Naive thymus-derived CD4-positive, alpha-beta T cell (primary cell): ENCODE measurements at regions of chr5 and their contacts with region 1.

Region 1: GRCh38 chr5:140113699-140114263 is at the start of gene PURA:
- DNase-seq: peak; percentile 94 to 98 (median 97)
- ATAC-seq: peak; percentile 93
- H3K4me3 ChIP-seq: peak within 1 kb of the TSS; percentile 77
- H3K4me3 Mint-ChIP-seq: peak within 1 kb of the TSS; percentile 86 to 97 (median 94)
- H3K27ac ChIP-seq: peak within 1 kb of the TSS; percentile 89
- H3K27ac Mint-ChIP-seq: peak within 1 kb of the TSS; percentile 88 to 99 (median 95)
- H3K4me1 ChIP-seq: peaks cover 46 to 57% of the 10 kb centered on the region in 2 donors
- H3K4me1 Mint-ChIP-seq: peaks cover 53 to 95% (median 77%) of the 10 kb centered on the region in 7 donors
- H3K27me3 ChIP-seq: peaks cover 0 to 7% of the 10 kb centered on the region in 2 donors
- H3K27me3 Mint-ChIP-seq: peaks cover 0 to 46% (median 4%) of the 10 kb centered on the region in 5 donors
- total RNA-seq, gene PURA: 11.6 to 33.5 (median 13.9) TPM

Region 2: GRCh38 chr5:138352071-138352721 is 1761.6 kb before region 1 on chr5 and contains the start of gene KDM3B:
- CTCF ChIA-PET with region 1: no interaction called
- POLR2A ChIA-PET with region 1: interaction called, 8 read pairs
- intact Hi-C with region 1: loop called in 1 of 2 experiments (anchors 10 kb)
- DNase-seq: peak; percentile 82 to 100 (median 96)
- ATAC-seq: peak; percentile 96
- H3K4me3 ChIP-seq: peak within 1 kb of the TSS; percentile 93
- H3K4me3 Mint-ChIP-seq: peak within 1 kb of the TSS; percentile 88 to 98 (median 96)
- H3K27ac ChIP-seq: peak within 1 kb of the TSS; percentile 91
- H3K27ac Mint-ChIP-seq: peak within 1 kb of the TSS; percentile 90 to 98 (median 96)
- H3K4me1 ChIP-seq: peaks cover 18 to 32% of the 10 kb centered on the region in 2 donors
- H3K4me1 Mint-ChIP-seq: peaks cover 30 to 54% (median 48%) of the 10 kb centered on the region in 7 donors
- H3K27me3 ChIP-seq: no peaks in the 10 kb centered on the region
- H3K27me3 Mint-ChIP-seq: no peaks in the 10 kb centered on the region
- total RNA-seq, gene KDM3B: 67.7 to 90.2 (median 82.8) TPM

Region 3: GRCh38 chr5:140073296-140073695 is 40.5 kb before region 1 on chr5:
- CTCF ChIA-PET with region 1: interaction called, 4 read pairs
- POLR2A ChIA-PET with region 1: interaction called, 11 read pairs
- intact Hi-C with region 1: loop called in 1 of 2 experiments (anchors 1 kb)
- DNase-seq: peak in 6 of 9 donors; percentile 25 to 54 (median 44)
- ATAC-seq: no peak
- H3K4me3 ChIP-seq: no peak overlapping the region
- H3K4me3 Mint-ChIP-seq: no peak overlapping the region
- H3K27ac ChIP-seq: no peak overlapping the region
- H3K27ac Mint-ChIP-seq: no peak overlapping the region
- H3K4me1 ChIP-seq: no peaks in the 10 kb centered on the region
- H3K4me1 Mint-ChIP-seq: no peaks in the 10 kb centered on the region
- H3K27me3 ChIP-seq: no peaks in the 10 kb centered on the region
- H3K27me3 Mint-ChIP-seq: peaks cover 12 to 50% (median 24%) of the 10 kb centered on the region in 5 donors

Region 4: GRCh38 chr5:140145818-140146522 is 32.2 kb after region 1 on chr5:
- CTCF ChIA-PET with region 1: interaction called, 39 read pairs
- POLR2A ChIA-PET with region 1: interaction called, 7 read pairs
- intact Hi-C with region 1: loop called (anchors 1 kb)
- DNase-seq: peak in 8 of 9 donors; percentile 25 to 69 (median 42)
- ATAC-seq: peak; percentile 86
- H3K4me3 ChIP-seq: peak overlapping the region; percentile 27
- H3K4me3 Mint-ChIP-seq: peak overlapping the region in 9 of 10 donors; percentile 16 to 81 (median 72)
- H3K27ac ChIP-seq: no peak overlapping the region
- H3K27ac Mint-ChIP-seq: no peak overlapping the region
- H3K4me1 ChIP-seq: peaks cover 6 to 9% of the 10 kb centered on the region in 2 donors
- H3K4me1 Mint-ChIP-seq: peaks cover 14 to 29% (median 25%) of the 10 kb centered on the region in 7 donors
- H3K27me3 ChIP-seq: peaks cover 0 to 6% of the 10 kb centered on the region in 2 donors
- H3K27me3 Mint-ChIP-seq: peaks cover 9 to 48% (median 21%) of the 10 kb centered on the region in 5 donors

Region 5: DNA sequence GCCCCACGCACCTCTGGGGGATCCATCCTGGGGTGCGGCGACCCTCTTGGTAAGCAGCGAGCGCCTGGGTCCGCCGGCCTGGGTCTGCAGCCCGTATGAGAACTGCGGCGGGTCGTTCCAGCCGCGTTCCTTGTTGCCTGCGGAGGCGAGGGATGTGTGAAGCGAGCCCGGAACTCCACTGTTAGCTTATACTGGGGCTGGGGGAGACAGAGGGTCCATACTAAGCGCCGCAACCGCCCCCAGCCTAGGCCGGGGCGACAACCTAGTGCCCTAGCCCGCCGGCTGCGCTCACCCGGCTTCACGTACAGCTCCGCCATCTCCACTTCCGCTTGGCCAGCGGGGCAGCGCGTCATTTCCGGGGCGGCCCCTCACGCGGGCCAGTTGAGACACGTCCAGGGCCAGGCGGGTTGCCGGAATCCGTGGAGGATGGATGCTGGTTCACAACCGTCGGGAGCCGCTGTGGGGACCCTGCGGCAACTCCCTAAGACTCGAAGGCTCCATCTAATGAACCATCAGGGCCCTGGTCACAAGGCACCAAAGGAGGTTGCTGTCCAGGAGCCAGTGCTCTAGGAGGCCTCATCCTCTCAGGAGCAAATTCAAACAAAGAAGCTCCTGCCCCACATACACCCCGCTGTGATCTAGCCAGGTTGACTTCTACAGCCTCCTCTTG is 443.5 kb after region 1 on chr5 and contains the start of gene SRA1:
- CTCF ChIA-PET with region 1: no interaction called
- POLR2A ChIA-PET with region 1: no interaction called
- intact Hi-C with region 1: loop called (anchors 5 kb)
- DNase-seq: peak; percentile 62 to 91 (median 72)
- ATAC-seq: peak; percentile 94
- H3K4me3 ChIP-seq: peak within 1 kb of the TSS; percentile 73
- H3K4me3 Mint-ChIP-seq: peak within 1 kb of the TSS; percentile 84 to 93 (median 92)
- H3K27ac ChIP-seq: peak within 1 kb of the TSS; percentile 97
- H3K27ac Mint-ChIP-seq: peak within 1 kb of the TSS; percentile 85 to 97 (median 95)
- H3K4me1 ChIP-seq: peaks cover 14 to 20% of the 10 kb centered on the region in 2 donors
- H3K4me1 Mint-ChIP-seq: peaks cover 45 to 63% (median 50%) of the 10 kb centered on the region in 7 donors
- H3K27me3 ChIP-seq: no peaks in the 10 kb centered on the region
- H3K27me3 Mint-ChIP-seq: no peaks in the 10 kb centered on the region
- total RNA-seq, gene SRA1: 23.8 to 45.5 (median 34.0) TPM

Region 6: DNA sequence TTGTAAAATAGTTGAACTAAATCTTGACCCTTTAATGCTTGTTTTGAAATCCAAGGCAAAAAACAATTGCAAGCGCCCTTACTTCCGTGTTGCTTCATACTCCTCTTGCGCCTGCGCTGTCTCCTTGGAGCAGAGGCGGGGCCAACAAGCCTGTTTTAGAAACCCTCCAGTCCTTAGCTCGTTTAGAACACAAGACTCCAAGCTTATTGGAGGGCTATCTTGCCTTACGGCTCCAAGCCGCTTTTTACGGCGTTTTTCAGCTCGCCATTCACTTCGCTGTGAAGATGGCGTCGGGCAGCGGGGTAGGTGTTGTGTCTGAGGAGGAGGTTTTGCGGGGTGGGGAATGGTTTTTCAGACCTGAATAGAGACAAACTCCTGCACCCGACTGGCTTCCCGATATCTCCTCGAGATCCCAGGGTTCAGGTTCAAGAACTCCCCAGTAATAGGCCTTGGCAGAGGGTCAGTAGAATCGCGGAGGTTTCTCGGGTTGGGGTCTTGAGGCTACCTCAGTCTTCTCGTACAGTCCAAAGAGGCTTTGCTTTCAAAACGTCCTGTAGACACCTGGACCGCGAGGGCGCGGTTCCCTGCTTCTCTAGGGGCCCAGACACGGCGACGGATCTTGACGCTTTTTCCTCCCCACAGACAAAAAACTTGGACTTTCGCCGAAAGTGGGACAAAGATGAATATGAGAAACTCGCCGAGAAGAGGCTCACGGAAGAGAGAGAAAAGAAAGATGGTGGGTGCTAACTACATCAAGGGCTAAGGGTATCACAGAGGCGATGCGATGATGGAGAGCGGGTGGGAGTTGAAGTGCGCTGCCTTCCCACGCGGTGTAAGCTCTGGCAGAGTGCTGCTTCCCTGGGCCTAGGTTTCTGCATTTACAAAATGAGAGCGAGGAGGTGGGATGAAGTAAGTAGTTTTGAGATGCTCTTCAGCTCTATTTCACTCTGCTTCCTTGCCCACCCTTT is 586.7 kb after region 1 on chr5 and contains the start of gene ZMAT2:
- CTCF ChIA-PET with region 1: no interaction called
- POLR2A ChIA-PET with region 1: no interaction called
- intact Hi-C with region 1: loop called in 1 of 2 experiments (anchors 10 kb)
- DNase-seq: peak; percentile 74 to 97 (median 92)
- ATAC-seq: peak; percentile 100
- H3K4me3 ChIP-seq: peak within 1 kb of the TSS; percentile 78
- H3K4me3 Mint-ChIP-seq: peak within 1 kb of the TSS; percentile 93 to 100 (median 98)
- H3K27ac ChIP-seq: peak within 1 kb of the TSS; percentile 87
- H3K27ac Mint-ChIP-seq: peak within 1 kb of the TSS; percentile 90 to 99 (median 97)
- H3K4me1 ChIP-seq: peaks cover 4 to 14% of the 10 kb centered on the region in 2 donors
- H3K4me1 Mint-ChIP-seq: peaks cover 18 to 35% (median 29%) of the 10 kb centered on the region in 7 donors
- H3K27me3 ChIP-seq: no peaks in the 10 kb centered on the region
- H3K27me3 Mint-ChIP-seq: no peaks in the 10 kb centered on the region
- total RNA-seq, gene ZMAT2: 37.7 to 63.0 (median 55.1) TPM